Calu3 (cell line): ENCODE measurements at regions of chr3 and their contacts with region 1.

Region 1: DNA sequence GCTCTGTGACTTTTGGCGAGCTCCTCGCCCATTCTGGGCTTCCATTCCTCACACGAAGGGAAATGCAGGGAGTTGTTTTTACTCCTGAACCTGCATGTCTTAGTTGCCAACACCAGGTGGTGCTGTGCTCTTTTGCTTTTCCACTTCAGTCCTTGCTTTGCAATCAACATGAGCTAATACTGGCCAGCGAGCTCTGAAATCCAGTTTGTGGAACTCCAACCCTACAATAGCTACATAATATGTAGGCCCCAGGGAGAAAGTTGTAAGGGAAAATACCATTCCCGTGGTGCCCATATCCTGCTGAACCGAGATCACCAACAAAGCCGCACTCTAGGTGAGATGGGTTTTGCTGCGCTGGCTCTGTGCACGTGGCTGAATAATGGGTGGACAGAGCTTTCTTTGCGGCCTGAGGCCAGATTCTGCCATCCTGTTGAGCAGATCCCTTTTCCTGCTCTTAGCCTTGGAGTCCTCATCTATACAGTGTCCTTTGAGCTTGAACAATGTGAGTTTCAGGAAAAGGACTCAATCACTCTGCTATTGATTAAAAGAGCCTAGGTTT is 25.0 kb downstream of the LSM3 start:
- DNase-seq: peak; percentile 64
- H3K4me3 Mint-ChIP-seq: no peak overlapping the region
- H3K27ac Mint-ChIP-seq: no peak overlapping the region
- H3K4me1 Mint-ChIP-seq: peaks cover 63% of the 10 kb centered on the region
- H3K27me3 Mint-ChIP-seq: no peaks in the 10 kb centered on the region
- CTCF ChIP-seq: peak; percentile 71

Region 2: GRCh38 chr3:13686367-13687160 is 517.0 kb before region 1 on chr3:
- CTCF ChIA-PET with region 1: no interaction called
- intact Hi-C with region 1: no loop called
- DNase-seq: no peak
- H3K4me3 Mint-ChIP-seq: no peak overlapping the region
- H3K27ac Mint-ChIP-seq: no peak overlapping the region
- H3K4me1 Mint-ChIP-seq: no peaks in the 10 kb centered on the region
- H3K27me3 Mint-ChIP-seq: peaks cover 81% of the 10 kb centered on the region
- CTCF ChIP-seq: no peak

Region 3: DNA sequence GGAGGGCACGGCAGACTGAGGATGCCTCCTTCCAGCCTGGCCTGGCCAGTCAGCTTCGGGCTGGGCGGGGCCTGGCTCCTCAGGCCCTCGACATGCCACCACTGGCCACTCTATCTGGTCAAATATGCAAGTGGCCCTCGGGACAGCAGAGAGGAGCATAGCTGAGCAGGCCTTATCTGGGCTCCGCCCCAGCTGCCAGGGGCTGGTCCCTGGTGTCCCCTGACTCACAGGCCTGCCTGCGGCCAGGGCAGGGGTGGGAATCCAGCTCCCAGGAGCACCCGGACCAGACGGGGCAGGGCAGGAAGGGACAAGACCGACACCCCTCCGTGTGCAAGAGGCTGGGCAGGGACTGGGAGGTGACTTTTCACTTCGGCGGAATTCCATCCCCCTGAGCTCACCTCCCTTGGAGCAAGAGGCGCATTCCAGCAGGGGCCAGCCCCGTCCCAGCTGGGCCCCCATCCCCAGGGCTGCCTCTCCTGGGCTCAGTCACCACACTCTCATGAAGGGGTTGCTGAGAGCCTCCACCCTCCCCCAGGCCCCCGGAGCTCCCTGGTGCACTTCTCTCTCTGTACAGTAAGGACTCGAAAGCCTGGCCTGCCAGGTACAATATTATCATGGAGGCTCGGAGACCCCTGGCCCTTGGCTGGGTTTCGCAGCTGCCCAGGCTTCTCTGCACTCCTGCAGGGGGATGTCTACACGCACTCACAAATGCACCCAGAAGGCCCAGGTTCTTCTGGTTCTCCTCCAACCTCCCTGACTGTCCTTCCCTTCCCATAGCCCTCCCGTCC is 353.2 kb before region 1 on chr3:
- CTCF ChIA-PET with region 1: no interaction called
- intact Hi-C with region 1: no loop called
- DNase-seq: peak; percentile 92
- H3K4me3 Mint-ChIP-seq: peak overlapping the region; percentile 26
- H3K27ac Mint-ChIP-seq: peak overlapping the region; percentile 35
- H3K4me1 Mint-ChIP-seq: peaks cover 43% of the 10 kb centered on the region
- H3K27me3 Mint-ChIP-seq: no peaks in the 10 kb centered on the region
- CTCF ChIP-seq: no peak

Region 4: GRCh38 chr3:14225421-14225820 is 21.8 kb after region 1 on chr3:
- CTCF ChIA-PET with region 1: interaction called, 5 read pairs
- intact Hi-C with region 1: loop called (anchors 1 kb)
- DNase-seq: peak; percentile 21
- H3K4me3 Mint-ChIP-seq: peak overlapping the region; percentile 3
- H3K27ac Mint-ChIP-seq: peak overlapping the region; percentile 24
- H3K4me1 Mint-ChIP-seq: peaks cover 60% of the 10 kb centered on the region
- H3K27me3 Mint-ChIP-seq: no peaks in the 10 kb centered on the region
- CTCF ChIP-seq: no peak

Region 5: DNA sequence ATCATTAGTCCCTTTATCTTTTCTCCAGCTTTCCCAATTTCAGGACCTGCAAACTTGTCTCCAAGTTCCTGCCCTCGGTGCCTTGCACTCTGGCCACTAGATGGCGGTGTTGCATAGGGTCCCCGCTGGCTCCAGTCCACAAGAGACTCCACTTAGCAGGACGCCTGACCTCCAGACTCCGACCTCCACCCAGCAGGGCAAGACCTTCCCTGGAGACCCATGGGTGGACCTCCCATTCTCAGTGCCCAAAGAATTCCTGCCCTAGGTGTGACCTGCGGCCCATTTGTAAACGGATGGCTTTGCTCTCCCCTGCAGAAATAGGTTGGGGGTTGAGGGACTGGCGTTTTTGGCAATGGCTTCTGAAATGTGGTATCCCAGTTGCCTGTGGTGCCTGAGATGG is 57.6 kb after region 1 on chr3:
- CTCF ChIA-PET with region 1: interaction called, 17 read pairs
- intact Hi-C with region 1: loop called (anchors 1 kb)
- DNase-seq: peak; percentile 88
- H3K4me3 Mint-ChIP-seq: no peak overlapping the region
- H3K27ac Mint-ChIP-seq: no peak overlapping the region
- H3K4me1 Mint-ChIP-seq: peaks cover 12% of the 10 kb centered on the region
- H3K27me3 Mint-ChIP-seq: no peaks in the 10 kb centered on the region
- CTCF ChIP-seq: peak; percentile 79

Region 6: GRCh38 chr3:14371573-14372474 is 168.2 kb after region 1 on chr3:
- CTCF ChIA-PET with region 1: interaction called, 21 read pairs
- intact Hi-C with region 1: loop called (anchors 2 kb)
- DNase-seq: peak; percentile 89
- H3K4me3 Mint-ChIP-seq: no peak overlapping the region
- H3K27ac Mint-ChIP-seq: peak overlapping the region; percentile 51
- H3K4me1 Mint-ChIP-seq: peaks cover 48% of the 10 kb centered on the region
- H3K27me3 Mint-ChIP-seq: peaks cover 11% of the 10 kb centered on the region
- CTCF ChIP-seq: no peak

Region 7: GRCh38 chr3:14426063-14426620 is 222.5 kb after region 1 on chr3:
- CTCF ChIA-PET with region 1: interaction called, 12 read pairs
- intact Hi-C with region 1: no loop called
- DNase-seq: peak; percentile 58
- H3K4me3 Mint-ChIP-seq: peak overlapping the region; percentile 49
- H3K27ac Mint-ChIP-seq: peak overlapping the region; percentile 78
- H3K4me1 Mint-ChIP-seq: peaks cover 67% of the 10 kb centered on the region
- H3K27me3 Mint-ChIP-seq: no peaks in the 10 kb centered on the region
- CTCF ChIP-seq: no peak

Region 8: DNA sequence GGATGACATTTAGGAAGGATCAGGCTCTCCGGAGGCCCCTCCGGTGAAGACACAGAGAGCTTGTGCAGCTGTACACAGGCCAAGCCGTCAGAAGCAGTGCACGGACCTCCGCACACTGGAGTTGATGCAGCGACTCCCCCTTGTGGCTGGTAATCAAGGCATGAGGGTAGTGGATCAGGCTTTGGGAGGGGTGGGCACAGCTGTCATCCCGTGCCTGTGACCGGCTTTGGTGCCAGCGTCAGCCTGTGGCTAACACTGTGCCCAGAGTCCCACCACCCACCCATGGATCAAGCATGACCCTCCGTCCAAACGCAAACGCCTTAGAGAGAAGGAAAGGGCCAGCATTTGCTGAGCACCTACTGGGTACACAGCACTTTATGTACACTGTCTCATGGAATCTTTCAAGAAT is 344.7 kb after region 1 on chr3:
- CTCF ChIA-PET with region 1: interaction called, 5 read pairs
- intact Hi-C with region 1: loop called (anchors 2 kb)
- DNase-seq: peak; percentile 59
- H3K4me3 Mint-ChIP-seq: no peak overlapping the region
- H3K27ac Mint-ChIP-seq: no peak overlapping the region
- H3K4me1 Mint-ChIP-seq: peaks cover 14% of the 10 kb centered on the region
- H3K27me3 Mint-ChIP-seq: peaks cover 68% of the 10 kb centered on the region
- CTCF ChIP-seq: peak; percentile 53

Region 9: GRCh38 chr3:14706096-14706495 is 502.5 kb after region 1 on chr3:
- CTCF ChIA-PET with region 1: no interaction called
- intact Hi-C with region 1: no loop called
- DNase-seq: no peak
- H3K4me3 Mint-ChIP-seq: no peak overlapping the region
- H3K27ac Mint-ChIP-seq: no peak overlapping the region
- H3K4me1 Mint-ChIP-seq: no peaks in the 10 kb centered on the region
- H3K27me3 Mint-ChIP-seq: no peaks in the 10 kb centered on the region
- CTCF ChIP-seq: no peak